Mammary epithelial cell (primary cell): ENCODE measurements at regions of chr6 and their contacts with region 1.

Region 1: GRCh38 chr6:107977283-107977682 is 19.3 kb upstream of the SEC63 start:
- DNase-seq: peak; percentile 26
- H3K4me3 ChIP-seq: no peak overlapping the region
- H3K27ac ChIP-seq: no peak overlapping the region
- H3K4me1 ChIP-seq: no peaks in the 10 kb centered on the region
- H3K27me3 ChIP-seq: no peaks in the 10 kb centered on the region
- CTCF ChIP-seq: peak; percentile 22 to 45

Region 2: DNA sequence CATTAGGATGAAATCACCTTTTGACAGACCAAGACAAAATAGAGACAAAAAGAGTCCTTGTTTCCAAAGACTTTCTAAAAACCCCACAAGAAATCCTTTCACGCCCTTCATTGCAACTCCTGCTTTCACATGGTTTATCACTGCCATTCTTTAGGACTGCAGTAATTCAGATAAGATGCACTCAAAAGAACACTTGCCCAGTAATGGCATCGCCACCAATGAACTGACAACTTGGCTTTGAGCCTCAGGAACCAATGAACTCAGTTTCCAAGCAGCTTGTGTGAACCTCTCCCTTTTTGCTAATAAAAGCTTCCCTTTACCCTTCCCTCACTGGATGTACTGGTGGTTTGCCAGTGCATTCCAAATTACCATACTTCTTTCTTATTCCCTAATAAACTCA is 75.4 kb after region 1 on chr6:
- CTCF ChIA-PET with region 1: no interaction called
- dilution Hi-C with region 1: no loop called
- in situ Hi-C with region 1: loop called in 1 of 2 experiments (anchors 10 kb)
- intact Hi-C with region 1: loop called (anchors 1 kb)
- DNase-seq: no peak
- H3K4me3 ChIP-seq: no peak overlapping the region
- H3K27ac ChIP-seq: no peak overlapping the region
- H3K4me1 ChIP-seq: no peaks in the 10 kb centered on the region
- H3K27me3 ChIP-seq: no peaks in the 10 kb centered on the region
- CTCF ChIP-seq: no peak

Region 3: DNA sequence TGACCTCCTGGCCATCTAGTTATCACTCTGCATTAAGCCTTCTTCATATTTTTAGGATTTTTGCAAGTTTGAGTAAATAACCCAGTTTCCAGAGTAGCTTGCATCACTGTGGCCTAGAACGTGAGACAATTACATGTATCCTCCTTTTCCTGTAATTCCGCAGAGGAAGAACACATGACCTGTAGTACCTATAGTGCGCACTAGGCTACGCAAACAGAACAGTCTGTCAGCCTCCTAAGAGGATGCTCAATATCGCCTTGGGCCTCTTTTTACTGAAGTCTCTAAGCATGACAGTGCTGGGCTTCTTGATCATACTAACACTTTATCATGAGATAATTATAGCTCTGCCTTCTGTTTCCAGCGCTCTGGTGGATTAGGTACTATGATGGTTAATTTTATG is 168.4 kb after region 1 on chr6:
- CTCF ChIA-PET with region 1: no interaction called
- dilution Hi-C with region 1: no loop called
- in situ Hi-C with region 1: no loop called
- intact Hi-C with region 1: no loop called
- DNase-seq: no peak
- H3K4me3 ChIP-seq: no peak overlapping the region
- H3K27ac ChIP-seq: no peak overlapping the region
- H3K4me1 ChIP-seq: no peaks in the 10 kb centered on the region
- H3K27me3 ChIP-seq: no peaks in the 10 kb centered on the region
- CTCF ChIP-seq: peak; percentile 2 to 7

Region 4: GRCh38 chr6:108492131-108492766 is 515.0 kb after region 1 on chr6:
- CTCF ChIA-PET with region 1: interaction called, 4 read pairs
- dilution Hi-C with region 1: no loop called
- in situ Hi-C with region 1: no loop called
- intact Hi-C with region 1: loop called (anchors 1 kb)
- DNase-seq: peak; percentile 37
- H3K4me3 ChIP-seq: no peak overlapping the region
- H3K27ac ChIP-seq: no peak overlapping the region
- H3K4me1 ChIP-seq: no peaks in the 10 kb centered on the region
- H3K27me3 ChIP-seq: no peaks in the 10 kb centered on the region
- CTCF ChIP-seq: peak; percentile 73 to 76

Region 5: GRCh38 chr6:108526739-108527174 is 549.5 kb after region 1 on chr6:
- CTCF ChIA-PET with region 1: no interaction called
- dilution Hi-C with region 1: no loop called
- in situ Hi-C with region 1: loop called (anchors 5 to 10 kb)
- intact Hi-C with region 1: loop called (anchors 1 kb)
- DNase-seq: peak; percentile 16
- H3K4me3 ChIP-seq: no peak overlapping the region
- H3K27ac ChIP-seq: no peak overlapping the region
- H3K4me1 ChIP-seq: no peaks in the 10 kb centered on the region
- H3K27me3 ChIP-seq: no peaks in the 10 kb centered on the region
- CTCF ChIP-seq: peak; percentile 78 to 80

Region 6: GRCh38 chr6:108841377-108841855 is 864.1 kb after region 1 on chr6:
- CTCF ChIA-PET with region 1: interaction called, 11 read pairs
- dilution Hi-C with region 1: no loop called
- in situ Hi-C with region 1: no loop called
- intact Hi-C with region 1: no loop called
- DNase-seq: no peak
- H3K4me3 ChIP-seq: no peak overlapping the region
- H3K27ac ChIP-seq: no peak overlapping the region
- H3K4me1 ChIP-seq: peaks cover 9% of the 10 kb centered on the region
- H3K27me3 ChIP-seq: no peaks in the 10 kb centered on the region
- CTCF ChIP-seq: no peak